Panc1 (cell line): ENCODE measurements at regions of chr17 and their contacts with region 1.

Region 1: DNA sequence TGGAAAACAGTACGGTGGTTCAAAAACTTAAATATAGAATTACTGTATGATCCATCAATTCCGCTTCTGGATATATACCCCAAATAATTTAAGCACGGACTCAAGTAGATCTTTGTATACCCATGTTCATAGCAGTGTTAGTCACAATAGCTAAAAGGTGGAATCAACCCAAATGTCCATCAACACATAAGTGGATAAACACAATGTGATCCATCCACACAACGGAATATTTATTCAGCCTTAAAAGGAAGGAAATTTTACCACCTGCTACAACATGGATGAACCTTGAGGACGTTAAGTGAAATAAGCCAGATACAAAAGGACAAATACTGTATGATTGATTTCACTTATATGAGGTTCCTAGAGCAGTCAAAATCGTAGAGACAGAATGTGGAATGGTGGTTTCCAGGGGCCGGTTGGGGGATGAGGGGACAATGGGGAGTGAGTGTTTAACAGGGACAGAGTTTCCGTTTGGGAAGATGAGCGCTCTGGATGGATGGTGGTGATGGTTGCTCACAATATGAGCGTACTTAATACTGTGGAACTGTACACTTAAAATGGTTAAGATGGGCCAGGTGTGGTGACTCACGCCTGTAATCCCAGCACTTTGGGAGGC is 5.4 kb upstream of the RNF222 start:
- DNase-seq: no peak
- ATAC-seq: no peak
- H3K4me3 ChIP-seq: no peak overlapping the region
- H3K27ac ChIP-seq: no peak overlapping the region
- H3K4me1 ChIP-seq: no peaks in the 10 kb centered on the region
- H3K27me3 ChIP-seq: no peaks in the 10 kb centered on the region
- CTCF ChIP-seq: no peak

Region 2: DNA sequence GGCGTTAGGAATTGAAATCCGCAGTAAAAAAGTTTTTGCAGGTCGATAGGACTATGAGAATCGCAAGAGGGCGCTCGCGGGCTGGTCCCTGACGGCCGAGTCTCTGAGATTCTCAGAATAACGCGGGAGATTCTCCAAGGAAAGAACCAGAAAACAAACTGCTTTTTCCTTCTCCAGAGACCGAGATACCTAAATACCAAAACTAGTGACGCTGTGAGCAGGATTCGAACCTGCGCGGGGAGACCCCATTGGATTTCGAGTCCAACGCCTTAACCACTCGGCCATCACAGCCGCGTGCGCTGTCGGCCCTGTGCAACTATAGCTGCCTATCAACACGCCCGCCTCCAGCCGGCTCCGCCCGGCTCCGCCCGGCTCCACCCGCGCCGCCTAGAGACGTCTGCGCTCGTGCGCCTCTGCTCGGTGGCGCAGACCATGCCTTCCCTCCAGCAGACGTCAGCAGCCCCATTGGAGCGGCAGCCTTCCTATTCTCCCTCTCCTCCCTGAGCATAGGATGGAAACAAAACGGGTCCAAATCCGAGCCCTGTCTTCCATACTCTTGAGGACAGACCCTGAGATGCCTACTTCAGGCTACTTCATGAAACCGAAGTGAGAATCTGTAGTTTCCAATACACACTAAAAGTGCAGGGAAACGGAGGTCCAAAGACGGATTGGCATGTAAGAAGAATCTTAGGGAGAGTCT is 264.2 kb before region 1 on chr17:
- CTCF ChIA-PET with region 1: no interaction called
- POLR2A ChIA-PET with region 1: no interaction called
- in situ Hi-C with region 1: no loop called
- intact Hi-C with region 1: no loop called
- DNase-seq: peak; percentile 98
- ATAC-seq: peak; percentile 94
- H3K4me3 ChIP-seq: peak overlapping the region; percentile 65 to 92
- H3K27ac ChIP-seq: peak overlapping the region; percentile 85
- H3K4me1 ChIP-seq: no peaks in the 10 kb centered on the region
- H3K27me3 ChIP-seq: no peaks in the 10 kb centered on the region
- CTCF ChIP-seq: peak; percentile 94

Region 3: GRCh38 chr17:8288336-8289102 is 114.5 kb before region 1 on chr17 and contains the start of gene RANGRF:
- CTCF ChIA-PET with region 1: no interaction called
- POLR2A ChIA-PET with region 1: no interaction called
- in situ Hi-C with region 1: no loop called
- intact Hi-C with region 1: no loop called
- DNase-seq: no peak
- ATAC-seq: peak; percentile 93
- H3K4me3 ChIP-seq: peak within 1 kb of the TSS; percentile 63 to 72
- H3K27ac ChIP-seq: peak within 1 kb of the TSS; percentile 87
- H3K4me1 ChIP-seq: peaks cover 12% of the 10 kb centered on the region
- H3K27me3 ChIP-seq: no peaks in the 10 kb centered on the region
- CTCF ChIP-seq: no peak
- total RNA-seq, gene RANGRF: 16.7 TPM

Region 4: GRCh38 chr17:8488901-8489300 is 85.9 kb after region 1 on chr17:
- CTCF ChIA-PET with region 1: interaction called, 12 read pairs
- POLR2A ChIA-PET with region 1: no interaction called
- in situ Hi-C with region 1: no loop called
- intact Hi-C with region 1: no loop called
- DNase-seq: peak; percentile 25
- ATAC-seq: peak; percentile 68
- H3K4me3 ChIP-seq: no peak overlapping the region
- H3K27ac ChIP-seq: no peak overlapping the region
- H3K4me1 ChIP-seq: no peaks in the 10 kb centered on the region
- H3K27me3 ChIP-seq: no peaks in the 10 kb centered on the region
- CTCF ChIP-seq: no peak